ENCODE measurements at regions of chr21 and their contacts with region 1.

Region 1: DNA sequence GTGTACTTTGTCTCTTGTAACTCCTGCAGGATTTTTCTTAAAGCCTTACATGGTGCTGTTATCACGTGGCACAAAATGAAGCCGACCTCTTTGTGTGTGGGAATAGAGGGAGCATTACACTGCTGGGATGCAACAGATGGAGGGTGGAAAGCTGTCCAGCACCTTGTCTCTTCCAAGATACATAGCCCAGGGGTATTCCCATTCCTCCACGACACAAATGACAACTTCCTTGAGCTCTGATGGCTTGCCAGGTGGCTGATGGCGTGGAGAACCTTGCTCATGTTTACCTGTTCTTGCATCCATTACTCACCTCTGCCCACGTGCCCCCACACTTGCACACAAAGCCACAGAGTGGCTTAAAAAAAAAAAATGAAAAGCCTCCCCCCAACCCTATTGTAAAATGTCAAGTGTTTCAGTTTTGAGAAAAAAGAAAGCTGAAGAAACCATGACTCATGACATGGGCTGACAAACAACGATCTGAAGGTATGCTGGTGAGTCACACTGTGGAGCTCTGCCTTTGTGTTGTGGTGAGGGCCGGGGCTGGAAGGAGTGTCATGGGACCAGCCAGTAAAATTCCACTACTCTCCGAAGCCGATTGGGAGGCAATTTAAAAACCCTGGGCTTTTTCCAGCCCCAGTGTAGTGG is 32.0 kb upstream of the ATP5PO start:
- DNase-seq: peak; percentile 99
- ATAC-seq: peak; percentile 94
- H3K4me3 ChIP-seq: peak overlapping the region; percentile 61
- H3K27ac ChIP-seq: peak overlapping the region; percentile 90
- H3K4me1 ChIP-seq: peaks cover 21% of the 10 kb centered on the region
- H3K27me3 ChIP-seq: no peaks in the 10 kb centered on the region
- CTCF ChIP-seq: no peak

Region 2: DNA sequence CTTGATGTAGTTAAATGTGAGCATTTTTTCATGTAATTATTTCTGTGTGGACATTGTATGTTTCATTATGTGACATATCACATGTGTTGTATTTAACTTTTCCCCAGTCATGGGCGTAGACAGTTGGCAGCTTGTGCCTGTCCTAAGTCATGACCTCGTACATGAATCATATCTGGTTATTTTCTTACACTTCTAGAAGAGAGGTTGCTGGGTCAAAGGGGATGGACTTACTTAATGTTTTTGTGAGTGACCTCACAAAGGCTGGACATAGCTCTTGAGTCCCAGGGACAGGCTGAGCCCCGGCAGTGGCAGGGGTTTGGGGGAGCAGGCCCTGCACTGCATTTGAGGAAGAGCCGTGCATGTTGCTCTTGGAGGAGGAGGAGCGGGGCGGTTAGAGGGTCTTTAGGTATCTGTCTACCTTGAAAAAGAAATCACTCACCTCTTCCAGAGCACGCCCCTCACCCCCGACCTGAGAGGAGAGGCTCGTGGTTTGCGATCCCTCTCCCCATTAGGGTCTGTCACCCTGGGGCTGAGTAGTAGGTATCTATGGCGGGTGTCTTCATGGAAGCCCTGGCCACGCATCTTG is 527.9 kb before region 1 on chr21:
- CTCF ChIA-PET with region 1: no interaction called
- POLR2A ChIA-PET with region 1: no interaction called
- intact Hi-C with region 1: no loop called
- DNase-seq: peak; percentile 73
- ATAC-seq: peak; percentile 53
- H3K4me3 ChIP-seq: no peak overlapping the region
- H3K27ac ChIP-seq: peak overlapping the region; percentile 92
- H3K4me1 ChIP-seq: peaks cover 41% of the 10 kb centered on the region
- H3K27me3 ChIP-seq: no peaks in the 10 kb centered on the region
- CTCF ChIP-seq: no peak

Region 3: GRCh38 chr21:33931799-33932390 is 15.7 kb before region 1 on chr21:
- CTCF ChIA-PET with region 1: interaction called, 5 read pairs
- POLR2A ChIA-PET with region 1: interaction called, 15 read pairs
- intact Hi-C with region 1: loop called (anchors 2 kb)
- DNase-seq: peak; percentile 25
- ATAC-seq: peak; percentile 69
- H3K4me3 ChIP-seq: peak overlapping the region; percentile 88
- H3K27ac ChIP-seq: peak overlapping the region; percentile 86
- H3K4me1 ChIP-seq: peaks cover 13% of the 10 kb centered on the region
- H3K27me3 ChIP-seq: no peaks in the 10 kb centered on the region
- CTCF ChIP-seq: no peak

Region 4: DNA sequence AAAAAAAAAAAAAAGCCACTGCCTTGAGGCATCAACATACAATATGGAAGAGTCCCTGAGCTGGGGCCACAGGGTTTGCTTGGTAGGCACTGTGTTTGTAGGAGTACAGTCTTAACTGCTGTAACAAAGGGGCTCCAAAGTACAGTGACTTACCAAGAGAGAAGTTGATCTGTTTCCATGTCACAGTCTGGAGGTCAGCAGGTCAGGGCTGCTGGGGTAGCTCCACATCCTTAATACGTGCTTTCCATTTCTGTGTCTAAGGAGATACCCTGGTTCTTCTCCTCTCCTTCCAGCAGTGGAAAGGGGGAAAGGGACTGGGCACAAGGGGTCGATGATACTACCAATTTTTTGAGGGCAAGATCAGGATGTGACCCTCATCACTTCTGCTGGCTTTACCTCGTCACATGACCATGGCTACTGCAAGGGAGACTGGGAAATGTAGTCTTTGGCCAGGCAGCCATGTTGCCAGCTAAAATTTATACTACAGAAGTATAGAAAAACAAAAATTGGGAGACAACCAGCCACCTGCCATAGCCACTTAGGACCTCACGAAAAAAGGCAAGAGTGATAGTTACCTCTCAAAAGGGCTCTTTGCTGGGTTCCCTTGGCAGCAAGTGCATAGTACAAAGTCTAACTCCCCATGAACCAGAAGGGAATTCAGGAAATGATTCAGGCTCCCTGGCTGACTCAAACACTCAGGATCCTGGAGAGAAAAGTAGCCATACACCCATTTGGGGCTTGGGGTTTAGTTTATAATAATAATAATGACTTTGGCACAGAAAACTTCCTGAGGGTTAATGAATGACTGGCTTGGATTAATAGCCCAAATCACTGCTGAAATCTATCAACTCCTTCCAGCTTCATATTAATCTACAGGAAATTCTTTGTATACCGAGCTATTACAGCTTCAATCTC is 20.8 kb after region 1 on chr21:
- CTCF ChIA-PET with region 1: interaction called, 5 read pairs
- POLR2A ChIA-PET with region 1: interaction called, 5 read pairs
- intact Hi-C with region 1: loop called (anchors 2 kb)
- DNase-seq: peak; percentile 90
- ATAC-seq: peak; percentile 84
- H3K4me3 ChIP-seq: peak overlapping the region; percentile 36; the same call in 1 of the 2 replicates
- H3K27ac ChIP-seq: peak overlapping the region; percentile 91
- H3K4me1 ChIP-seq: peaks cover 46% of the 10 kb centered on the region
- H3K27me3 ChIP-seq: no peaks in the 10 kb centered on the region
- CTCF ChIP-seq: no peak

Region 5: DNA sequence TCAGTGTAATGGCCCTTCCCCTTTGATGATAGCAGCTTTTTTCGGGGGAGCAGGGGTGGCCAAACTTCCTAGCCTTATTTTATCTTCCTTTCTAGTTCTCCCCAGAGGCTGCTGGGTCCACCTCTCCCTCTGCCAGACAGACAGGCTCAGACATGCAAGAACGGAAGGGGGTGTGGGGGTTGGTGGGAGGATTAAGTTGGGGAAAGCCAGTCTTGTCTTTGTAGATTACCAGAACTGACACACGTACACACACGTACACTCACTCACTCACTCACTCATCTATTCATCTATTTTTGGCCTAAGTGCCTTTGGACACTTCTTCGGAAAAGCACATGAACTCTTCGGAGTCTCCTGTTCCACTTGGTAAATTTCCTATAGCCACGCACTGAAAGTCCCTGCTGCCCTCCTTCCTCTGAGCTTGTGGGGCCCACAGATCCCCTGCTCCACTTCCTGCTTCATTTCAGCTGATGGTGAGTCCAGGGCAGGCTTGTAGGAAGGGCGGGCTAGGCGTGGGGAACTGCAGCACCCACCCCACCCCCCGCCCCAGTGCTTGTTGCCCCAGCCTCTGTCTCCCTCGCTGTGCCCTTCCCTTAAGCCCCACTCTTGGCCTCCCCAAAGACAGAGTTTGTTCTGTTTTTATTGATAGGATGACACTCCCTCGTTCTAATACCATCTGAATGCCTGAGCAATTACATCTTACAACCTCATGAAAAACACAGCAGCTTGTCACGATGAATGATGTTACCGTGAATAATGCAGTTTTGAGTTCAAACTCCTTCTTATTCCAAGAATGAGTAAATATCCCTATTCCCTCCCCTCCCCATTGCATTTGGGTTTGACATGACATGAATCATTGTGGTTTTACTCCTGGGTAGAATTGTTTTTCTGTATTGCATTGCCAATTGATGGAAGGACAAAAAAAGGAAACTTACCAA is 28.8 kb after region 1 on chr21:
- CTCF ChIA-PET with region 1: interaction called, 3 read pairs
- POLR2A ChIA-PET with region 1: no interaction called
- intact Hi-C with region 1: loop called (anchors 1 kb)
- DNase-seq: peak; percentile 98
- ATAC-seq: peak; percentile 76
- H3K4me3 ChIP-seq: peak overlapping the region; percentile 44
- H3K27ac ChIP-seq: peak overlapping the region; percentile 98
- H3K4me1 ChIP-seq: peaks cover 48% of the 10 kb centered on the region
- H3K27me3 ChIP-seq: no peaks in the 10 kb centered on the region
- CTCF ChIP-seq: no peak

Region 6: DNA sequence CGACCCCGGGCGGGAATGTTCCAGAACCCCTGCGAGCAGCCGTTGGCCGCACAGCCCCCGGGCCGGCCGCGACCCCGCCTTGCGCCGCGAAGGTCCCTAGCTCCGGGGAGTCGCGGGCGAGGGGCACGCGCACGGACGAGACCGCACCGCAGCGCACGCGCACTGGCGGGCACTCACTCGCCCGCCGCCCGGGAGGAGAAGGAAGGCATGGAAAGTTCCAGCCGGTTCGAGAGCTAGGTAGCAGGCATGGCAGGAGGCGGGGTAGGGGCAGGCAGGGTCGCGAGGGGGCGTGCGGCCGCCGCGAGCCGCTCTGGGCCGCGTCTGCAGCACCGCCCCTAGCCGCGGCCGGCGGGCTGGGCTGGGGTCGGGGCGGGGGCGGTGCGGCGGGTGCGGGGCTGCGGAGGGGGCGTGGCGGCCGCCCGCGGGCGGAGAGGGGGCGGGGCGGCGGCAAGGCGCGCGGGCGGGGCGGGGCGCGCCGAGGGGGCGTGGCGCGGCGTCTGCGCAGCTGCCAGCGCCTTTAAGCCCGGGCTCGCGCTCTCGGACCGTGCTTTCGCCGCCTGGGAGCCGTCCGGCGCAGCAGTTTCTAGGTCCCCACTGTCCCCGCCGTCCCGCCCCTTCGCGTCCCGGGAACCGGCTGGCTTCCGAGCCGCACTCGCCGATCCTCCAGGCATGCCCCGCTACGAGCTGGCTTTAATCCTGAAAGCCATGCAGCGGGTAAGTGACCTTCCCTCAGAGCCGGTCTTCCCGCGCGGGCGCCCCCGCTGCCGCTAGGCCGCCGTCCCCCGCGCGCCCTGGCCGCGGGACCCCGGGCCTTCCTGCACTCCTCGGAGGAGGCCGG is 125.7 kb after region 1 on chr21 and contains the starts of genes MRPS6 and SLC5A3:
- CTCF ChIA-PET with region 1: no interaction called
- POLR2A ChIA-PET with region 1: interaction called, 6 read pairs
- intact Hi-C with region 1: loop called (anchors 5 kb)
- DNase-seq: peak; percentile 83
- ATAC-seq: peak; percentile 82
- H3K4me3 ChIP-seq: peak within 1 kb of the TSS; percentile 78
- H3K27ac ChIP-seq: no peak within 1 kb of the TSS
- H3K4me1 ChIP-seq: peaks cover 41% of the 10 kb centered on the region
- H3K27me3 ChIP-seq: no peaks in the 10 kb centered on the region
- CTCF ChIP-seq: no peak
- total RNA-seq, gene MRPS6: 32.8 and 35.0 TPM in 2 replicates
- total RNA-seq, gene SLC5A3: 13.4 and 13.8 TPM in 2 replicates

Region 7: DNA sequence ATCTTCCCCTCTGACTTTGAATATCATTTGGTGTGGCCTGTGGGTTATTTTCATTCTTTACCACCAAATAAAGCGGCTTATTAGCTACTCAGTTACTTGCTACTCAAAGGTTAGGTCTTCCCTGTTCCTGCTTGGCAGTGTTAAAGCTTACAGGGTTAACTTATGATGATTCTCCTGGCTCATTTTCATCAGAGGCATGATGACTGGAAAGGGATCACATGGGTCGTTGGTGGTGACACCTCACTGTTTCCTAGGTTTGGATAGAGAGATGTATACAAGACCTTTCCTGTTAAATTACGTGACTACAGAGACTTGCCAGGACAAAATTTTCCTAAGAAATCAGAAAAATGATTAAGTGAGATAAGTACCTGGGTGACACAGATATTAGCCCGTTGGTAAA is 153.2 kb after region 1 on chr21:
- CTCF ChIA-PET with region 1: no interaction called
- POLR2A ChIA-PET with region 1: interaction called, 16 read pairs
- intact Hi-C with region 1: no loop called
- DNase-seq: no peak
- ATAC-seq: peak; percentile 12; the same call in 1 of the 2 replicates
- H3K4me3 ChIP-seq: no peak overlapping the region
- H3K27ac ChIP-seq: no peak overlapping the region
- H3K4me1 ChIP-seq: no peaks in the 10 kb centered on the region
- H3K27me3 ChIP-seq: no peaks in the 10 kb centered on the region
- CTCF ChIP-seq: no peak

Region 8: GRCh38 chr21:34707876-34708325 is 760.3 kb after region 1 on chr21:
- CTCF ChIA-PET with region 1: no interaction called
- POLR2A ChIA-PET with region 1: no interaction called
- intact Hi-C with region 1: no loop called
- DNase-seq: no peak
- ATAC-seq: no peak
- H3K4me3 ChIP-seq: no peak overlapping the region
- H3K27ac ChIP-seq: no peak overlapping the region
- H3K4me1 ChIP-seq: no peaks in the 10 kb centered on the region
- H3K27me3 ChIP-seq: no peaks in the 10 kb centered on the region
- CTCF ChIP-seq: no peak